MCF 10A (cell line): ENCODE measurements at regions of chr2 and their contacts with region 1.

Region 1: GRCh38 chr2:17429130-17429529 is 89.1 kb downstream of the RAD51AP2 start:
- DNase-seq: peak; percentile 79
- H3K4me3 Mint-ChIP-seq: no peak overlapping the region
- H3K27ac Mint-ChIP-seq: peak overlapping the region; percentile 90
- H3K4me1 Mint-ChIP-seq: peaks cover 13% of the 10 kb centered on the region
- H3K27me3 Mint-ChIP-seq: no peaks in the 10 kb centered on the region
- CTCF ChIP-seq: no peak

Region 2: DNA sequence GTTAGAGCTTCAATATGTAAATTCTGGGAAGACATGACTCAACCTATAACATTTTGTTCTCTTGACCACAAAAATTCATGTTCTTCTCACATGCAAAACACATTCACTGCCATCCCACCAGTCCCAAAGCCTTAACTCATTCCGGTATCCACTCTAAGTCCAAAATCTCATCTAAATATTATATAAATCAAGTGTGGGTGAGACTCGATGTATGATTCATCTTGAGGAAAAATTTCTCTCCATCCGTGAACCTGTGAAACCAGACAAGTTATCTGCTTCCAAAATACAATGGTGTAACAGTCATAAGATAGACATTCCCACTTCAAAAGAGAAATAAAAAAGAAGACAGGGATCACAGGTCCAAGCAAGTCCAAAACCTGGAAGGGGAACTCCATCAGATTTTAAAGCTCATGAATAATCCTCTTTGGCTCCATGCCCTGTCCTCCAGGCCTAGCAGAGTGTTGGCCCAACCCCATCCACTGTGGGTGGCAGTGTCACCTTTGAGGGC is 12.2 kb before region 1 on chr2:
- CTCF ChIA-PET with region 1: no interaction called
- POLR2A ChIA-PET with region 1: interaction called, 16 read pairs
- intact Hi-C with region 1: no loop called
- DNase-seq: peak; percentile 94
- H3K4me3 Mint-ChIP-seq: no peak overlapping the region
- H3K27ac Mint-ChIP-seq: peak overlapping the region; percentile 88
- H3K4me1 Mint-ChIP-seq: peaks cover 20% of the 10 kb centered on the region
- H3K27me3 Mint-ChIP-seq: no peaks in the 10 kb centered on the region
- CTCF ChIP-seq: no peak

Region 3: GRCh38 chr2:17442334-17442733 is 13.2 kb after region 1 on chr2:
- CTCF ChIA-PET with region 1: interaction called, 4 read pairs
- POLR2A ChIA-PET with region 1: interaction called, 5 read pairs
- intact Hi-C with region 1: loop called (anchors 1 kb)
- DNase-seq: peak; percentile 75
- H3K4me3 Mint-ChIP-seq: no peak overlapping the region
- H3K27ac Mint-ChIP-seq: peak overlapping the region; percentile 47
- H3K4me1 Mint-ChIP-seq: peaks cover 11% of the 10 kb centered on the region
- H3K27me3 Mint-ChIP-seq: no peaks in the 10 kb centered on the region
- CTCF ChIP-seq: no peak